ENCODE measurements at regions of chr14 and their contacts with region 1.

Region 1: GRCh38 chr14:104085030-104085888 is at the start of gene ASPG:
- DNase-seq: no peak
- H3K4me3 ChIP-seq: peak within 1 kb of the TSS in 1 of 2 donors; percentile 30
- H3K27ac ChIP-seq: no peak within 1 kb of the TSS
- H3K4me1 ChIP-seq: peaks cover 4% of the 10 kb centered on the region
- H3K27me3 ChIP-seq: peaks cover 5% of the 10 kb centered on the region
- CTCF ChIP-seq: no peak
- POLR2A ChIP-seq: no peak
- total RNA-seq, gene ASPG: 3.7 TPM

Region 2: DNA sequence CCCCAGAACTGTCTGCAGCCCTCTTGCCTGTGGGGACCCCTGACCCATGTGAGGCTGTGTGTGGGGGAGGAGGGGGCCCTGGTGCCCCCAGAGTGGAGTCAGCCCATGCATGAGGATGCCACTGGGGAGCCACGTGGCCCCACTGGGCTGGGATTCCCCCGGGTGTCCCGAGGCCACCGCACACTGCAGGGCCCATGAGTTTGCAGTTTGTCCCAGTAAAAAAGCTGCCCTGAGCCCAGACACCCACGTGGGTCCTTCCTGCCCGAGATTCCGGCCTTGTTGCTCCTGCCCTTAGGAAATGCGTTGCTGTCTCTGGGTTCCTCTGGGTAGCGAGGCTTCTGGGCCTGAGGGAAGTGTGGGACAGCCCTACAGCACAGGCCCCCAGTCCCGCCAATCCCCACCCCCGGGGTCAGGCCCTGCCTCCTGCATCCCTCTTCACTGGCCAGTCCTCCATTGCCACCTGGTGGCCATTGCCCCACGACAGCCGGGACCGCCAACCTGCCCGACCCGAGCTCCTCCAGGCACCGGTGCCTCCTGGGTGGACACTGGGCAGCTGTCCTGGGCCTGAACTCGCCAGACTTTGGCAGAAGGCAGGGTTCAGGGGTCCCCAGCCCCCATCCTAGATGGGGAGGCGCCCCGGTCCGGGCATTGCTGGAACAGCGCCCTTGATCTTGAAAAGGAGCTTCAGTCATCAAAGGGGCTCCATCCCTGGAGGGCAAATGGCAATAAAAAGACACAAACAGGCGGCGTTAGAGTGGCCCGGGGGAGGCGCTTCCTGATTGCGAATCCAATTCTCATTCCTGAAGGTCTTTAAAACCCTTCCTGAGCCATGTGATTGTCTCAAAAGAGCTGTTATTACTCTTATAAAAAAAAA is 478.7 kb after region 1 on chr14:
- intact Hi-C with region 1: loop called (anchors 10 kb)
- DNase-seq: no peak
- H3K4me3 ChIP-seq: no peak overlapping the region
- H3K27ac ChIP-seq: no peak overlapping the region
- H3K4me1 ChIP-seq: peaks cover 12% of the 10 kb centered on the region
- H3K27me3 ChIP-seq: peaks cover 3% of the 10 kb centered on the region
- CTCF ChIP-seq: peak; percentile 70 to 85 (median 76)
- POLR2A ChIP-seq: no peak

Measured in vagina (tissue), 2 donors.